ENCODE measurements at regions of chr14 and their contacts with region 1.

Region 1: GRCh38 chr14:35814371-35815005 is 5.4 kb upstream of the RALGAPA1 start:
- DNase-seq: peak; percentile 86
- H3K4me3 Mint-ChIP-seq: no peak overlapping the region
- H3K27ac Mint-ChIP-seq: no peak overlapping the region
- H3K4me1 Mint-ChIP-seq: no peaks in the 10 kb centered on the region
- H3K27me3 Mint-ChIP-seq: peaks cover 3% of the 10 kb centered on the region

Region 2: DNA sequence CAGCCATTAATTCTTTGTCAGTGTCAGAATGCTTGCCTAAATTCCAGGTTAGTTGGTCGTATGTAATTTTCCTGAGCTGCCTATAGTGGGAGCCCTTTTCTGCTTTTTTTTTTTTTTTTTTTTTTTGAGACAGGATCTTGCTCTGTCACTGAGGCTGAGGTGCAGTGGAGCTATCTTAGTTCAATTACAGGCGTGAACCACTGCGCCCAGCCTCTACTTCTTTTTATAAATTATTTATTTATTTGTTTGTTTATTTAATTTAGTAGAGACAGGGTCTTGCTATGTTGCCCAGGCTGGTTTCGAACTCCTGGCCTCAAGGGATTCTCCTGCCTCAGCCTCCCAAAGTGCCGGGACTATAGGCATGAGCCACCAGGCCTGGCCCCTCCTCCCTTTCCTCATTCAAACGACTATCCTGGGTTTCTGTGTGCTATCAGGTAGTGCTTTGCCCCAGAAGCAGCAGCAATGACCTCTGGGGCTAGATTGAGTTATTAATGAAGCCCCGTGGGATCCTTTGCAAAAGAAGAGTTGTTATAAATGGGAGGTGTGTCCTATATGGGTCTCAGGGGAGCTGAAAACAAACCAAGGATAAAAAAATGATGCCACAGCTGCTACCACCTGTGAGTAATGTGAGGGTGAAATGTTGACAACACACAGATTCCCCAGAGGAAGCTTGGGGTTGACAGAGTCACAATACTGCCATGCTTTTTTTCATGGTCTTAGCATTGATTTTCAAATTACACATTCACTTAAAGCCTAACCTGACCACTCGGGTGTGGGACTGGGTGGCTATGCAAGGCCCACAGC is 375.4 kb before region 1 on chr14:
- CTCF ChIA-PET with region 1: interaction called, 97 read pairs
- DNase-seq: no peak
- H3K4me3 Mint-ChIP-seq: no peak overlapping the region
- H3K27ac Mint-ChIP-seq: no peak overlapping the region
- H3K4me1 Mint-ChIP-seq: peaks cover 5% of the 10 kb centered on the region
- H3K27me3 Mint-ChIP-seq: no peaks in the 10 kb centered on the region